K562 (cell line): ENCODE measurements at regions of chr3 and their contacts with region 1.

Region 1: DNA sequence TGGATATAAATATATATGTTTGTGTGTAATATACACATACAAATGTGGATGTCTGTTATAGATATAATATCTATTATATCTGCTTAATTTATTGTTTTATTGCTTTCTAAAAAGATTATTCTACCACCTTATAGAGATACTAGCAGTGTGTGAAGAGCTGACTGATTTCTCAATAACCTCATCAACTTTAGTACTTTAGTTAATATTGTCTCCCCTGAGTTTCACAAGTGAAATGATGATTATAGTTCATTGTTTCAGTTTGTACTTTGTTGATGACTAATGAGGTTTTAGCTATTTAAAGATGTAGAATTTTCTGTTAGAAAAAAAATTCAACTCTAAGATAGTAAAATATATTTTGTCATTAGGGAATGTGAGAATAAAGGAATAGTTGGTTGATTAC is 11.4 kb downstream of the RSRC1 start:
- DNase-seq: no peak
- ATAC-seq: no peak
- H3K4me3 ChIP-seq: no peak overlapping the region
- H3K27ac ChIP-seq: no peak overlapping the region
- H3K4me1 ChIP-seq: peaks cover 5 to 9% of the 10 kb centered on the region in 2 experiments; a peak in 4 of 5 replicates
- H3K27me3 ChIP-seq: no peaks in the 10 kb centered on the region
- CTCF ChIP-seq: no peak
- EP300 ChIP-seq: no peak
- POLR2A ChIP-seq: no peak
- RAD21 ChIP-seq: no peak

Region 2: GRCh38 chr3:158109804-158110657 is 11.3 kb before region 1 on chr3 and contains the start of gene RSRC1:
- CTCF ChIA-PET with region 1: no interaction called
- POLR2A ChIA-PET with region 1: interaction called, 20 read pairs
- in situ Hi-C with region 1: no loop called
- intact Hi-C with region 1: no loop called
- DNase-seq: peak; percentile 86 to 93 (median 88)
- ATAC-seq: peak; percentile 93
- H3K4me3 ChIP-seq: peak within 1 kb of the TSS; percentile 68
- H3K27ac ChIP-seq: peak within 1 kb of the TSS; percentile 92
- H3K4me1 ChIP-seq: peaks cover 6 to 16% of the 10 kb centered on the region in 2 experiments; a peak in 4 of 5 replicates
- H3K27me3 ChIP-seq: no peaks in the 10 kb centered on the region
- CTCF ChIP-seq: peak in 2 of 3 experiments; percentile 1 to 15; a peak in 2 of 6 replicates
- EP300 ChIP-seq: peak; percentile 38
- POLR2A ChIP-seq: peak; percentile 97
- RAD21 ChIP-seq: 0 out of 4 replicates have a peak, but pooled peaks have one; percentile 2 to 9
- polyA plus RNA-seq, gene RSRC1: 53.6 to 96.8 TPM

Region 3: GRCh38 chr3:158200955-158201354 is 79.7 kb after region 1 on chr3:
- CTCF ChIA-PET with region 1: no interaction called
- POLR2A ChIA-PET with region 1: no interaction called
- in situ Hi-C with region 1: no loop called
- intact Hi-C with region 1: no loop called
- DNase-seq: no peak
- ATAC-seq: no peak
- H3K4me3 ChIP-seq: no peak overlapping the region
- H3K27ac ChIP-seq: no peak overlapping the region
- H3K4me1 ChIP-seq: no peaks in the 10 kb centered on the region
- H3K27me3 ChIP-seq: no peaks in the 10 kb centered on the region
- CTCF ChIP-seq: no peak
- EP300 ChIP-seq: no peak
- POLR2A ChIP-seq: no peak
- RAD21 ChIP-seq: no peak